Cardiac septum (tissue), 1 donor: ENCODE measurements at regions of chr6 and their contacts with region 1.

Region 1: DNA sequence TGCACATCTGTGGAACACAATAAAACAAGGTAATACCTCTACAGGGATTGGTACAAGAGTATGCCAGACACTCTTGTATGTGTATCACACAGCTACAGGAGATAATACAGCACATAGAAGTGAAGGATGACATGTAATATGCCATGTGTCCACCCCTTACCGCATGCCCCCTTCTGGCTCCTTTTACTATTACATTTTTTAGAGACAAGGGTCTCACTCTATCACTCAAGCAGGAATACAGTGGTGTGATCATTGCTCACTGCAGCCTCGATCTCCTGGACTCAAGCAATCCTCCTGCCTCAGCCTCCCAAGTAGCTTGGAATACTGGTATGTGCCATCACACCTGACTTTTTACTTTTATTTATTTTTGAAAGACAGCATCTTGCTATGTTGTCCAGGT is 4.2 kb upstream of the NCR3 start:
- DNase-seq: no peak

Region 2: DNA sequence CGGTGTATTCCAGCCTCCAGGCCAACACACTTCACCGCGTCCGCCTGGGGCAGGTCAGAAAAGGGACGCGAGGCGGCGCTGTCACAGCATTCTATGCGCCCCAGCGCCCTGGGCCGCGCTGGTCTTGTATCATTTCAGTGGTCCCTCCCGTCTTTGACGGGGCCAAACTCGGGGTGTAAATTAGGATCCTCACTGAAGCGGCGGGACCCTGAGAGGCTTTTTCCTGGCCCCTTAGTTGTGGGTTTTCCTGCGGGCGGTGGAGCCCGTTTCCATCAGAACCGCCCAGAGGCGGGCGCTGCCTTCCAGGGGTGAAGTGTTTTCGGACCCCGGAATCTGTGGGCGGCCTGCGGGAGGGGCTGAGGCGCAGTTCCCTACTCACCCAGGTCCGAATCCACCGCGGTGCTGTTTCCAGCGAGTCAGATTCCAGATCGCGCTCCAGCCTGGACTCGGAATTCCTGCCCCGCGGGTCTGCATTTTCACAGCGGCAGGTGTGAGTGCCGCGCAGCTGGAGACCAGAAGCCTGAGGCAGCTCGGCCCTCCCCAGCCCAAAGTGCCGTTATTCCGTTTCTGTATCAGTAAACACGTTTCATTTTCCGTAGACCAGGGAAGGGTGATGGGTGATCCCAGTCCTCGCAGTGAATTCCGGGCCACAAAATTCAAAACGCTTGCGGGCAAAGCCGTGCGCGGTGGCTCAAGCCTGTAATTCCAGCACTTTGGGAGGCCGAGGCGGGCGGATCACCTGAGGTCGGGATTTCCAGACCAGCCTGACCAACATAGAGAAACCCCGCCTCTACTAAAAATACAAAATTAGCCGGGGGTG is 102.9 kb before region 1 on chr6:
- intact Hi-C with region 1: loop called (anchors 5 kb)
- DNase-seq: peak; percentile 94

Region 3: GRCh38 chr6:31580807-31581433 is 16.1 kb before region 1 on chr6:
- intact Hi-C with region 1: loop called (anchors 2 kb)
- DNase-seq: peak; percentile 96